ENCODE measurements at regions of chr10 and their contacts with region 1.

Region 1: DNA sequence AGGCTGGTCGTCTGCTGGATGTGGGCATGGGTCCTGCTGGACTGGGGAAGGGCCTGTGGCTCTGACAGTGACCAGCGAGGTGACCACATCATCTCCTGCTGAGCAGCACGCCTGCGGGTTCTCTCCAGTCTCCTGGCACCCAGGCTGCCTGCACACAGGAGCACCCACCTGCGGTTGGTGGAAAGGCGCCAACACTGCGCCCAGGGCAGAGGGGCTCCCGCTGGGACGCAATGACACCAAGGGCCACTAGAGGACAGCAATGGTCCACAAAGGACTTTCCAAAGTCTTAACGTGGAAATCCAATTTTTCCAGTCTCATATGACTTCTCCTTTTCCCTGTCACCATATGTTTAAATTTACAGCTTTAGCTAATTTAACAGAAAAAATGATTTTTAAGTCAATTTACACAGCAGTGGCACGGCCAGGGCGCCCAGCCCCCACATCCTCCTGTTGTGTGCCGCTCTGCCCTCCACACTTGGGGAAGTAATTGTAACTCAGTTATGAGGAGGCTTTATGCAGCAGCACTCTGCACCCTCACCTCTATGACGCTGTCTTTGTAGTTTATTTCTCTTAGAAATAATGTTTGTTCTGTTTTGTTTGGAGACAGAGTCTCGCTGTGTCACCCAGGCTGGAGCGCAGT is 38.1 kb downstream of the CFAP46 start:
- DNase-seq: peak; percentile 75
- ATAC-seq: peak; percentile 69
- H3K4me3 Mint-ChIP-seq: no peak overlapping the region
- H3K27ac Mint-ChIP-seq: no peak overlapping the region
- H3K4me1 Mint-ChIP-seq: peaks cover 14% of the 10 kb centered on the region
- H3K27me3 Mint-ChIP-seq: peaks cover 13% of the 10 kb centered on the region

Region 2: DNA sequence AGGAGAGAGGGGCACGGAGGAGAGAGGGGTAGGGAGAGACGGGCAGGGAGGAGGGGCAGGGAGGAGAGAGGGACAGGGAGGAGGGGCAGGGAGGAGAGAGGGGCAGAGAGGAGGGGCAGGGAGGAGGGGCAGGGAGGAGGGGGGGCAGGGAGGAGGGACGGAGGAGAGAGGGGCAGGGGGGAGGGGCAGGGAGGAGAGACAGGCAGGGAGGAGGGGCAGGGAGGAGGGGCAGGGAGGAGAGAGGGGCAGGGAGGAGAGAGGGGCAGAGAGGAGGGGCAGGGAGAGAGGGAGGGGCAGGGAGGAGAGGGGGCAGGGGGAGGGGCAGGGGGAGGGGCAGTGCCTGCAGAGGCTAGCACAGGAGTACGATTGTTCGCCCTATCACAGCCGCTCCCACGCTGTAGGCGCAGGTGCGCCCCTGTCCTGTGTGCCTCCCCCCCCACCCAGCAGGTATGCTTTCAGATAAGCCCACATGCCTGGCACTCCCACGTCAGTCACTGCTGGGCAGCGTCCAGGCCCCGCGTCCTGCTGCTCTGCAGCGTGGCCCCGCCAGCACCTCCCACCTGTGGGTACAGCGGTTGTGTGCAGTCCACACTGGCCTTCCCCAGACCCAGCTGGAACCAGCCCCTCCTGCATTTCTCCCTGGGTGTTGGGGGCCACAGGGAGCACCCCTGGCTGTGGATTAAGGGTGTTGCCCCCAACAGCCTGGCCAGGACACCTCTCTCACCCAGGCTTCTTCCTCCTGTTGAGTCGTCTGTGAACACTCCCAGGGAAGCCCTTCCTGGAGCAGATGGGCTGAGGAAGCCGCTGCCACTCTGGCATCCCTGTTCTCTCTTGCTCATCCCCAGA is 129.2 kb before region 1 on chr10:
- CTCF ChIA-PET with region 1: no interaction called
- POLR2A ChIA-PET with region 1: no interaction called
- intact Hi-C with region 1: no loop called
- DNase-seq: no peak
- ATAC-seq: no peak
- H3K4me3 Mint-ChIP-seq: no peak overlapping the region
- H3K27ac Mint-ChIP-seq: no peak overlapping the region
- H3K4me1 Mint-ChIP-seq: no peaks in the 10 kb centered on the region
- H3K27me3 Mint-ChIP-seq: no peaks in the 10 kb centered on the region

Region 3: DNA sequence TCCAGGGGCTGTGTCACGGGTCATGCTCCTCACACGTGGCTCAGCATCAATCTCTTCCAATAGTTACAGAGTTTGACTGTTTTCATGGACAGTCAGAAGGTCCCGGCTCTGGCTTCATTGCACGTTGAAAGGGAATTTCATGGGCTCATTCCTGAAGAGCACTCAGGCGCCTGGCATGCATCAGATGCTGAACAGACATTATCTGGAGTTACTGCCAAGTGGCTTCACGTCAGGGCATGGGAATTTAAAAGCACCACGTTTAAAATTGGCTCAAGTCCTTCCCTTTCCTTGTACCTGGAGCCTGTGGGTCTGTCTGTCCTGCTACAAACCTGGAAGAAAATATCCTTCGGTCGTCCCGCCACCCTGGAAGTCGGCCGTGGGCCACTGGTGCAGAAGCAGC is 12.3 kb before region 1 on chr10:
- CTCF ChIA-PET with region 1: interaction called, 10 read pairs
- POLR2A ChIA-PET with region 1: no interaction called
- intact Hi-C with region 1: no loop called
- DNase-seq: no peak
- ATAC-seq: no peak
- H3K4me3 Mint-ChIP-seq: no peak overlapping the region
- H3K27ac Mint-ChIP-seq: no peak overlapping the region
- H3K4me1 Mint-ChIP-seq: no peaks in the 10 kb centered on the region
- H3K27me3 Mint-ChIP-seq: peaks cover 16% of the 10 kb centered on the region

Region 4: DNA sequence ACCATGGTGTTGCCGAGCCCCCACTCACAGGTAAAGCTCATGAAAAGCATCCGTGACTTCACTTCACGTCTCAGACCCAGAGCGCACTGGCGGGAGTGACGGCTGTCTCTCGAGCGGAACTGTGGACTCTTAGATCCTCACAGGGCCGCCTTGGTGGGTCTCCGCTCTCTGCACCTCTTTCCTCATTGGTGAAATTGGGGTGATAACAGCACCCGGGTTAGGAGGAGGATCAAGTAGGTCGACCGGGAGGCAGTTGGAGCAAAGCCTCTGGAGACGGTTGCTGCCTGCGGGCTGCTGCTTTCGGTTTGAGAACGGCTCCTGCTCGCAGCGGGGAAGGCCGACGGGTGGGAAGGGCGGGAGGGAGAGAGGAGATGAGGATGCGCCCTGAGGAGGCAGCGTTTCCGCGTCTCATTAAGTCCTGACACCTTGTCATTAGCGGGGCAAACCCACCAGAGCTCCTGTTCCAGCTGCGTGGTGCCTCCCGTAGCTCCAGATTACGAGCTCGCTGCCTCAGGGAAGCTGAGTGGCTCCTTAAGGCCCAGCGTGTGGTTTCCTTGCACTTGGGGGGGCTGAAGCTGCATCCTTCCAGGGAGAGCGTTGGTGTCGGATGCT is 90.0 kb after region 1 on chr10:
- CTCF ChIA-PET with region 1: no interaction called
- POLR2A ChIA-PET with region 1: no interaction called
- intact Hi-C with region 1: no loop called
- DNase-seq: no peak
- ATAC-seq: no peak
- H3K4me3 Mint-ChIP-seq: no peak overlapping the region
- H3K27ac Mint-ChIP-seq: no peak overlapping the region
- H3K4me1 Mint-ChIP-seq: no peaks in the 10 kb centered on the region
- H3K27me3 Mint-ChIP-seq: no peaks in the 10 kb centered on the region